Activated T-helper 1 cell treated with anti-CD3 and anti-CD28 coated beads, Interleukin-12 subunit alpha, Interleukin-12 subunit beta, Interleukin-2, Interleukin-4 antibody, amounts not matched to agents 30 ng/mL and 10 ng/mL and 1 ng/mL, durations not matched to agents 14 hours and 24 hours and 36 hours (primary cell): ENCODE measurements at regions of chr6 and their contacts with region 1.

Region 1: DNA sequence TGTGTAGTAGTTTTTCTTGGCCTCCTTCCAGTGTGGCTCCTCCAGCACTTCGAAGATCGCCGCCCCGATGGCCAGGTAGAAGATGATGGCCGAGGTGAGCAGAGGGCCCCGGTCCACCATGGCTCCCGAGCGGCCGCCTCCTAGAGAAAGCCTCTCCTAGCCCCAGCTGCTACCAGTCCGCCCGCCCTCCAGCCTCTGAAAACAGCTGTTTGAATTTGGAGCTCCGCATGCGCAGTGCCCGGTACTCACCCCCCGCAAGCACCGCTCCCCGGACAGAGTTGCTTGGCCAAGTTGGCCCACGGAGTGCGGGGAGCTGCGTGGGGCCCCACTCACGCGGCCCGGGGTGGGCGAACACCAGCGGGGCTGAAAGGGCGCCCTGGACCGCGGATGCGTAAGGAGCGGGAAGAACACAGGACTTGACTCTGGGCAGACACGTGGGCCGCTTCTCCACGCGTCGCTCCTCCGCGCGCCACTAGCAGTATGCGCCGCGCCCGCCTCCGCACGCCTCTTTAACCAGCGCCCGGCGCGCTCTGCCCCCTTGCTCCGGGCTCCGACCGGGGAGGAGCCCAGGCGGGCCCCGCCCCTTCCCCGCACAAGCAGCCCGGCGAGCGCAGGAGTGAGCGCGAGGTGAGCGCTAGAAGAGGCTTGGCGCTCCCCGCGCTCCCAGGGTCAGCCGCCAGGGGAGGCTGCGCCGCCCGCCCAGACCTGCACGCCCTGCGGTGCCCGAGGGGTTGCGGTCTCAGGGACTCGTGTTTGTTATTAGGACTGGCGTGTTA is at the start of gene KCNK5:
- DNase-seq: peak; percentile 86
- H3K4me3 Mint-ChIP-seq: peak within 1 kb of the TSS; percentile 88
- H3K27ac Mint-ChIP-seq: peak within 1 kb of the TSS; percentile 94
- H3K4me1 Mint-ChIP-seq: peaks cover 54% of the 10 kb centered on the region
- H3K27me3 Mint-ChIP-seq: no peaks in the 10 kb centered on the region
- total RNA-seq, gene KCNK5: 36.7 and 38.7 TPM in 2 replicates

Region 2: DNA sequence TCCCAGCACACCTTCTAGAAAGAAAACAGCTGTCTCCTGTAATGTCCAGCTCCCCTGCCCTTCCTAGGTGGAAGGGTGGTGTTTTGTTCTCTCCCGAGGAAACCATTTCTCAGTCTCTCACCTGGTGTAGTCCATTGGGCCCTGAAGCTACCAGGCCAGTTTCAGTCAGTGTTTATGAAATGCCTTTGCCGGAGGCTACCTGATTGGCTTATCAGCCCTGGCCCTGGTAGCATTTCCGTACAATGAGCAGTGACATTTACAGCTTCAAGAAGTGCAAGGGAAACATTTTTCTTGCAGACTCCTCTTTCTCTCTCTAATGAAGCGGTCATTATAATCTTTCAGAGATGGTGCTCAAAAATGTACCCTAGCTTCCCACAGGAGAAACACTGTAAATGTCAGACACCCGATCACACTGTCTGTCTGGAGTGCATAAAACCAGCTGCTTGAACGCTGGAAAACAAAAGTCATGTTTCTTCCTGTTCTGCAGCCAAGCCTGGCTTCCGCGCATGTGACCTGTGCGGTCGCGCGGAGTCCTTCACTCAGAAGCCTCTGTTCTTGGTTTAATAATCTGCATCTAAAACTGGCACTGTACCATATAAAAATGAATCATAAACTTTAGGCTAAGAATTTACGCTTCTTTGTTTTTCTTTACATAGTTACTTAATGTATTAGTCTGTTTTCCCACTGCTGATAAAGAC is 85.8 kb before region 1 on chr6:
- intact Hi-C with region 1: no loop called
- DNase-seq: no peak
- H3K4me3 Mint-ChIP-seq: no peak overlapping the region
- H3K27ac Mint-ChIP-seq: no peak overlapping the region
- H3K4me1 Mint-ChIP-seq: no peaks in the 10 kb centered on the region
- H3K27me3 Mint-ChIP-seq: peaks cover 1% of the 10 kb centered on the region

Region 3: DNA sequence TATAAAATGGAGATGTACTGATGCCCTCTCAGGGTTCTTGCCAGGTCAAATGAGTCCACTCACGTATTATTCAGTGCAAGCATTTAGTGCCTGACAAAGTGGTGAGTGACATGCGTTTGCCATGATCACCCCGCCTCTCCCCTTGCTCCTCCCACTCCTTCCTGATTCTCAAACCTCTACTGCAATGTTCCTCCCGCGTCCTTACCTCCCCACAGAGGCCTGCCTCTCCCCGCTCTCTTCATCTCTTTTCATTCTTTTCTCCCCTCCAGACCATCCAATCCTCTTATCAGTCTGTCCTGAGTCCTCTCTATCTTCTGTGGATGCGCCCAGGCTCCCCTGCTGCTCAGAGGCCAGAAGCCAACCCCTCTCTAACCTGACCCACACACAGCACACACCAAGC is 40.6 kb before region 1 on chr6:
- intact Hi-C with region 1: loop called (anchors 1 kb)
- DNase-seq: no peak
- H3K4me3 Mint-ChIP-seq: peak overlapping the region; percentile 45
- H3K27ac Mint-ChIP-seq: peak overlapping the region; percentile 27
- H3K4me1 Mint-ChIP-seq: peaks cover 27% of the 10 kb centered on the region
- H3K27me3 Mint-ChIP-seq: no peaks in the 10 kb centered on the region

Region 4: DNA sequence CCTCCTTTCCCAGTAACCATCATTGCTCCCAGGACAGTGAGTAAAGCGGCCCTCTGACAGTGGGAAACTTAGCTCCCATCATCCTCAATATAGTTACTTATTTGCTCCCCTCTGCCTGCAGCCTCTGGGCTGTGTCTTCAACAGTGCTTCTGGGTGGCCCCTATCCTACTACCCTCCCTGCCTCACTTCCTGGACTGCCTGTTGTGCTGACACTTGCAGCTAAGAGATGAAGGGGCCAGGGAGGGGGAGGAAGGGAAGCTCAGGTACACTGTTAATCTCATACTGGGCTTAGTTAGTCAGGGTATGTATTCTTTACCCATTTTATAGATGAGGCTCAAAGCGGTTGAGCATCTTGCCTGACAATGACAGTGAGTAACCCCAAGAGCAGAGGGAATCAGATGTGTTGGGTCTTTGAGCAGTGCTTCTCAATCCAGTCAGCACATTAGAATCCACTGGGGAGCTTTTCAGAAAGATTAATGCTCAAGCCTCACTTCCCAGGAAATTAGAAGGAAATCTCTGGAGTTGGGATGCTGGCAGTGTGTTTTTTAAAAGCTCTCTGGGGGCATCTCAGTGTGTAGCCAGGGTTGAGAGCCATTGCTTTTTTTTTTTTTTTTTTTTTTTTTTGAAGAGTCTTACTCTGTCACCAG is 27.2 kb after region 1 on chr6:
- intact Hi-C with region 1: loop called (anchors 2 kb)
- DNase-seq: no peak
- H3K4me3 Mint-ChIP-seq: no peak overlapping the region
- H3K27ac Mint-ChIP-seq: peak overlapping the region; percentile 10
- H3K4me1 Mint-ChIP-seq: no peaks in the 10 kb centered on the region
- H3K27me3 Mint-ChIP-seq: peaks cover 15% of the 10 kb centered on the region

Region 5: DNA sequence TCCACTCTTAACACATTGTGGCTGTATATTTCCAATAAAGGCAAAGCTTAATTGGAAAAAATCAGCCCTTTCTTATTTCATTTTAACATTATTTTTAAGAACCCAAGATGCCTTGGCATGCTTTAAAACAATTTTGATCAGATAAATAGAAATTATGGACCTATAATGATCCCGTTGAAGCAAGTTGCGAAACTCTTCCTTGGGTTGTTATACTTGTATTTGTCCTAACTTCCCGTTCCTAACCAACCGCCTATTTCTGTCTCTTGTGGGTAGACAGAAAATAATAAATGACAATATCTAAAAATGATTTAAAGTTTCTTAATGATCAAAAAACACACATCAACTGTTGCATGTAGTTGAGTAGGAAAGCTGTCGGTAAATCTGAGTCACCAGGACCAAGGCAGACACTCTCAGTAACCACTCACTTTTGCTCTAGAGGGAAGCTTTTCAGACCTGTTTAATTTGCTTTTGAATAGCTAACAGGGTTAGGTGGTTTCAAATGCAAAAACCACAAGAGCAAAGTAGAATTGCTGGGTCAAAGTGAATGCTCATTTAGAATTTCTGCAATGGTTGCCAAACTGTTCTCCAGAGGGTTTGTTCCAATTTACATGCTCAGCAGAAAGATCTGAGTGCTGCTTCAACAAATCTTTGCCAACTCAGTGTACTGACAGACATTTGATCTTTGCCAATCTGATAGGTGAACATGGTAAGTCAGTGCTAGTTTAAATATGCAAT is 34.3 kb after region 1 on chr6:
- intact Hi-C with region 1: loop called (anchors 1 kb)
- DNase-seq: no peak
- H3K4me3 Mint-ChIP-seq: no peak overlapping the region
- H3K27ac Mint-ChIP-seq: peak overlapping the region; percentile 6
- H3K4me1 Mint-ChIP-seq: peaks cover 14% of the 10 kb centered on the region
- H3K27me3 Mint-ChIP-seq: peaks cover 1% of the 10 kb centered on the region

Region 6: DNA sequence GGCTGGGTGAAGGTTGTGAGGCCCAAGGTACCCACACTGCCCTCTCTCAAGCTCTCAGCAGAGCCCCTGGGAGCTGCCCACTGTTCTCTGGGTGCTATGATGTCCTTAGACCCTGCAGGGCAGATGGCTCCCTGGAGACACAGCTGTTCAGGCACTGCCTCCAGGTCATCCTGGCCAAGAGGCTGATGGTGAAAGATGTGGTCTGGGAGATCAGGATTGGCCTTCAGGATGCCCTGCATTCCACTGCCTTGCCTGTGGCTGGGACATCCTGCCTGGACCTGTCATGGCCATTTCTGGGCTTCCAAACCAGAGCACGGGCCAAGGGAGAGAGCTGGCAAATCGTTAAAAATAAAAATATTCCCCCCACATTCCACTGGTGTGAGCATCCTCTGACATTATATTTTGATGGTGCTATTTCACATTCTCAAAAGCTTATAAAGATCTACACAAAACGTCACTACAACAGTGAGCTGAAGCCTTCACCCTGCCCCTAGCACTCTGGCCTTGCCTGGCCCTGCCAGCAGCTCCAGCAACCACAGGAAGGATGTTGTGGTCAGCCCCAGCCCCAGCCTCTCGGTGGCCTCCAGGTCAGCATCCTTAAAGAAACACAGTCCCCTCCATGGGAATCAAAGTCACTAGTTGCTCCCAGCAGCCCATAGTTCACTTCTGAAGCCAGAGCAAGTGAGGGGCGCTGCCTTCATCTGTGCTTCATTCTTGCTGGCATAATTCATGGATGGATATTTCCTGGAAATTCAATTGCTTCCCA is 106.8 kb after region 1 on chr6:
- intact Hi-C with region 1: no loop called
- DNase-seq: peak; percentile 4
- H3K4me3 Mint-ChIP-seq: no peak overlapping the region
- H3K27ac Mint-ChIP-seq: no peak overlapping the region
- H3K4me1 Mint-ChIP-seq: peaks cover 10% of the 10 kb centered on the region
- H3K27me3 Mint-ChIP-seq: peaks cover 21% of the 10 kb centered on the region